ENCODE measurements at regions of chr14 and their contacts with region 1.

Region 1: DNA sequence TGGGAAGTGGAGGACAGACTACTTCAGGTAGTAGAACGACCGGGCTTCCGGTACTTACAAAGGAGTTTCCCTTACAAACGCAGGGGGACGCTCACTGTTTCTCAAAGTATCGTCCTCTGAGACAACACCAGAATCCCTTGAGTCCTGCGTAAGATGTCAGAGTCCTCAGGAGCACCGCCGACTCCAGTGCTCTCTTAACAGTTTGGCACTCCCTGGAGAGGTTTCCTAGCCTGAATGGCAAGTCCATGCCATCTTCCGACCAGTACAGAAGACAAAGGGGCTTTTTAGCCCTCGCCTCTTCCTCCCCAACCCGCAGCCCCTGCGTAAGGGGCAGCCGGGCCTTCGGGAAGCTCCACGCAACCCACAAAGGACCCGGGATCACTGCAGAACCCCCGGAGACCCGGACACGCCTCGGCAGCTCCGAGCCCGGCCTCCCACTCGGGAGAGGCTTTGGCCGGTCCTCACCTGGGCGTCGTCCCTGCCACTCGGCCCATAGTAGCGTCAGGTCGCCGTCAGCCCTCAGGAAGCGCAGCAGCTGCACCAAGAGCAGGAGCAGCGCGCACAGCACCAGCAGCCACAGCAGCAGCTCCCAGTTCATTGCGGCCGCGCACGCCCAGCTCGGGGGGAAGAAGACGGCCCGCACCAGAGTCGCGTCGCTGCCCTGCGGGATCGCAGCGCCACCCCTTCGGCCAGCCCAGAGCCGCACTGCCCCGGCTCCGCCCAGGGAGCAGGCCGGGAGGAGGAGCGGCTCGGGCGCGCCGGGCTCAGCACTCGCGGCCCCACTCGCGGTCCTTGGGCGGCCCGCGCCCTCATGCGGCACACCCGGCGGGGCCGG is at the start of gene DHRS7:
- DNase-seq: peak; percentile 89
- H3K4me3 Mint-ChIP-seq: peak within 1 kb of the TSS; percentile 98
- H3K27ac Mint-ChIP-seq: peak within 1 kb of the TSS; percentile 99
- H3K4me1 Mint-ChIP-seq: peaks cover 30% of the 10 kb centered on the region
- H3K27me3 Mint-ChIP-seq: no peaks in the 10 kb centered on the region
- total RNA-seq, gene DHRS7: 42.9 TPM in 2 replicates

Region 2: DNA sequence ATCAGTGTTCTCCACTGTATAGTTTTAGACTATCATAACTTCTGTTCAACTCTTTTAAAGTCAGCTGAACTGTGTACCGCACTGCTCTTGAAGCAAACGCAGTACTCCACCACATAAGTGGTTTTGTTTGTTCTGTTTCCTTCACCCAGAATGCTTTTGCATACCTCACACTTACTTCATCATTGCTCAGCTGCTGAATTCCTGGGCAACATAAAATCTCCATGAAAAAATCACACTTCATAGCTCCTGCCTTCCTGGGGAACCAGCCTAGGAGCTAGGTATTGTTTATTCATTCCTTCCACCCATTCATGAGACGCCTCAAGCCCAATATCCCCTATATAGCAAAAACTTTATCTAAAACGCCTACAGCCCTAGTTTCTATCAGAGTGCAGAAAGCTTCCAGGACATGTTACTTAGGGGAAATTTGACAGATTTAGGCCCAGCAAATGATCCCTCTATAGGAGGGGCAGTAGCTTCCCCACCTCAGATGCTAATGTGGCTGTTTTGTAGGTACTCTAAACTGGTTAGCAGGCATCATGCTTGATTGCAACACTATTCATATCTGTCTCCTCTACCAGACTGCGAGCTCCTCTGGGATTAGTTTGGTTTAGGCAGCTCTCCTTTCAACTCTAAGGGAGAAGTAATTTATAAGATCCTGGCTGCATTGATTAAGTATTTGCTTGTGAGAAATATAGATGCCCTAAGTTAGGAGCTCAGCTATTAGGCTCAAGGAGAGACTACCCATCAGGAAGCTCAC is 200.5 kb before region 1 on chr14:
- intact Hi-C with region 1: loop called (anchors 5 kb)
- DNase-seq: no peak
- H3K4me3 Mint-ChIP-seq: peak overlapping the region; percentile 78
- H3K27ac Mint-ChIP-seq: no peak overlapping the region
- H3K4me1 Mint-ChIP-seq: peaks cover 12% of the 10 kb centered on the region
- H3K27me3 Mint-ChIP-seq: peaks cover 7% of the 10 kb centered on the region

Region 3: GRCh38 chr14:60151715-60152114 is 13.2 kb before region 1 on chr14:
- intact Hi-C with region 1: loop called (anchors 1 kb)
- DNase-seq: peak; percentile 88
- H3K4me3 Mint-ChIP-seq: peak overlapping the region; percentile 31
- H3K27ac Mint-ChIP-seq: peak overlapping the region; percentile 90
- H3K4me1 Mint-ChIP-seq: peaks cover 30% of the 10 kb centered on the region
- H3K27me3 Mint-ChIP-seq: no peaks in the 10 kb centered on the region

Measured in activated CD4-positive, alpha-beta T cell treated with anti-CD3 and anti-CD28 coated beads, Interleukin-2, amount 10 ng/mL, durations not matched to agents 24 days and 14 days (primary cell).